Endothelial cell of umbilical vein (primary cell): ENCODE measurements at regions of chr6 and their contacts with region 1.

Region 1: DNA sequence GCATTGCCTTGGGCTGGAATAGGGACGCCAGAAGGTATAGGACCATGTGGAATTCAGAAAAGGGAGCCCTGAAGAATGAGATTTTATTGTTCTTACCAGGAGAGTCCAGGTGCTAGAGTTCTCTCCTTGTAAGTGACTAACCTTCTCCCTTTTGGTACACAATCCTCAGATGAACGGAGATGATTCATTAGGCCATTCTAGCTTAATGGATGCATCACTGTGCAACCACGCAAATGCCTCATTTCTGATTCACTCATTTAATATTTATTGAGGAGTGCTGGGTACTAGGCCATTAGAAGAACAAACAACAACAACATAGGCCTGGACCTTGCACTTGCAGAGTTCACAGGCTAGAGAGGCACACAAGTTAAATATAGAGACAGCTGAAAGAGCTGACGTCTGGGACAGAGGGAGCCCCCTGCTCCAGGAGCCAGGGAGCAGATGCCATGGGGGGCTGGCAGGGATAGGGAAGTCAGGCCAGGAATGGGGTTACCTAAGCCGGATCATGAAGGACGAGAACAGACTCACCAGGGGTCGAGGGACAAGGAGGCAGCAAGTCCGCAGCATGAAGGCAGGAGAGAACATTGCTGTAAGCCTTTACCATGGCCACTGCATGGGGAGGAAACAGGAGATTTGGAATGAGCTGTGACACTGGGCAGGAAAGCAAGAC is 179.5 kb upstream of the AKAP12 start:
- DNase-seq: peak; percentile 90
- H3K4me3 ChIP-seq: no peak overlapping the region
- H3K27ac ChIP-seq: peak overlapping the region; percentile 95
- H3K4me1 ChIP-seq: peaks cover 55% of the 10 kb centered on the region
- H3K27me3 ChIP-seq: no peaks in the 10 kb centered on the region
- CTCF ChIP-seq: no peak
- POLR2A ChIP-seq: no peak

Region 2: DNA sequence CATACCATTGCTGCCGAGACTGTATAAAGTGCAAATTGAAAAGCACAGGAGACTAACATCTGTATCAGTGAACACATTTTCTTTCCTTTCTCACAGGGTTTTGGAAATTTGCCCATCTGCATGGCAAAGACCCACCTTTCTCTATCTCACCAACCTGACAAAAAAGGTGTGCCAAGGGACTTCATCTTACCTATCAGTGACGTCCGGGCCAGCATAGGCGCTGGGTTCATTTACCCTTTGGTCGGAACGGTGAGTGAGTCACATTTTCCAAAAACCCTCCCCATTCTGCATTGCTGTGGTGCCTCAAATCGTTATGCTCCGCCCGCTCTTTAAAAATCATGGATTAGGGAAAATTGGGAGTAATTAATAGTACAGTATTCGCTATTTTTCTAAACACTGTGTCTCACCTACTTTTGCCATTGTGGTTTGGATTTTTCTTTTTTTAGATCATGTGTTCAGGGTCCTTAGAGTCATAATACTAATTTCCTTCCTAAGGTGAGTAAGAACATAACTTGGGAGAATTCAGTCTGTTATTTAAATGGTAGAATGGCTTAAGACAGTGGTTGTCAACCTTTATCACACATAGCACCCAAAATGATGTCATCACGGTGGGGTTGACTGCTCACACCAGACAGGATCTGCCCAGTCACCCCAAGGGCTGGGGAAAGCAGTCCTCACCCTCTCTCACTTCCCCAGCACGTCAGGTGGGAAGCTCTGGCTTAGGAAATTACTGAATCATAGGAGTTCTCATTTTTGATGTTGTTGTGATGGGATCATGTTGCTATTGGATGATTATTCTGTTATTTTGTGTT is 23.2 kb before region 1 on chr6:
- CTCF ChIA-PET with region 1: interaction called, 4 read pairs
- POLR2A ChIA-PET with region 1: no interaction called
- dilution Hi-C with region 1: no loop called
- intact Hi-C with region 1: loop called (anchors 1 kb)
- DNase-seq: peak; percentile 82
- H3K4me3 ChIP-seq: no peak overlapping the region
- H3K27ac ChIP-seq: peak overlapping the region; percentile 100
- H3K4me1 ChIP-seq: peaks cover 52% of the 10 kb centered on the region
- H3K27me3 ChIP-seq: no peaks in the 10 kb centered on the region
- CTCF ChIP-seq: no peak
- POLR2A ChIP-seq: peak; percentile 44